ENCODE measurements at regions of chr2 and their contacts with region 1.

Region 1: DNA sequence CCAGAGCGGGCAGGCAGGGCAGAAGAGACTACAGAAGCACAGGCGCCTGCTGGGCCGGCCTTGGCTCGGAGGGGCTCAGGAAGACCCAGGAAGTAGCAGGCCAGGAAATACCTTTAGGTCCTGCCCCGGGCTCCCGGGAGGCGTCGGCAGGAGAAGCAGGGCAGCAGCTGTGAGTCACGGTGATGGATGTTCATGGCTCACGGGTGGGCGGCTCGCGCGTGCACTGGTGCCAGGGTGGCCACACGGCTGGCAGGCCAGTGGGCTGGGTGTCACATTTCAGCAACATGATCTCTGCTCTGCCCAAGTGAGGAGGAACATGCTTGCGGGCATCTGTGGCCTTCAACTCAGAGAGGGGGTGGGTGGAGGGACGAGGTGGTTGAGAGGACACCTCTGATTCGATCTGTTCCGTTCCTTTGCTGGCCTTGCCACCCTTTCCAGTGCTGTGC is 139.3 kb downstream of the KLHL29 start:
- DNase-seq: peak; percentile 91 to 98
- ATAC-seq: peak; percentile 77 to 78
- H3K4me3 ChIP-seq: peak overlapping the region; percentile 42 to 55 (median 46)
- H3K27ac ChIP-seq: peak overlapping the region; percentile 93 to 97 (median 96)
- H3K4me1 ChIP-seq: peaks cover 54 to 56% of the 10 kb centered on the region in 2 donors
- H3K27me3 ChIP-seq: no peaks in the 10 kb centered on the region
- CTCF ChIP-seq: peak in 1 of 5 experiments; percentile 12
- POLR2A ChIP-seq: peak; percentile 73 to 89

Region 2: DNA sequence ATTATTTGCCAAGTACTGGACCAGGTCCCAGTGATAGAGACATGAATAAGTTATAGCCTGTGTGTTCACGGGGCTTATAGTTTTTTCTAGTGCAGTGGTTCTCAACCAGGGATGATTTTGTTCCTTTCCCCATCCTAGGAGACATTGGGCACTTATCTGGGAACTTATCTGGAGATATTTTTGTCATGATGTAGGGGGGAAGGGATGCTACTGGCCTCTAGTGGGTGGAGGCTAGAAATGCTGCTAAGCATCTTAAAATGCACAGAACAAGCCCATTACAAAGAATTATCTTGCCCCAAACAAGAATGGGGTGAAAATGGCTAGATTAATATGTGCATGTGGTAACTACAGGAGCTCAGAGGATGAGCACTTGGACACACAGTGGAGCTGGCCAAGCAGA is 64.1 kb before region 1 on chr2:
- in situ Hi-C with region 1: no loop called
- intact Hi-C with region 1: no loop called
- DNase-seq: no peak
- ATAC-seq: no peak
- H3K4me3 ChIP-seq: no peak overlapping the region
- H3K27ac ChIP-seq: no peak overlapping the region
- H3K4me1 ChIP-seq: no peaks in the 10 kb centered on the region
- H3K27me3 ChIP-seq: no peaks in the 10 kb centered on the region
- CTCF ChIP-seq: peak in 2 of 5 experiments; percentile 15 to 41
- POLR2A ChIP-seq: no peak

Region 3: DNA sequence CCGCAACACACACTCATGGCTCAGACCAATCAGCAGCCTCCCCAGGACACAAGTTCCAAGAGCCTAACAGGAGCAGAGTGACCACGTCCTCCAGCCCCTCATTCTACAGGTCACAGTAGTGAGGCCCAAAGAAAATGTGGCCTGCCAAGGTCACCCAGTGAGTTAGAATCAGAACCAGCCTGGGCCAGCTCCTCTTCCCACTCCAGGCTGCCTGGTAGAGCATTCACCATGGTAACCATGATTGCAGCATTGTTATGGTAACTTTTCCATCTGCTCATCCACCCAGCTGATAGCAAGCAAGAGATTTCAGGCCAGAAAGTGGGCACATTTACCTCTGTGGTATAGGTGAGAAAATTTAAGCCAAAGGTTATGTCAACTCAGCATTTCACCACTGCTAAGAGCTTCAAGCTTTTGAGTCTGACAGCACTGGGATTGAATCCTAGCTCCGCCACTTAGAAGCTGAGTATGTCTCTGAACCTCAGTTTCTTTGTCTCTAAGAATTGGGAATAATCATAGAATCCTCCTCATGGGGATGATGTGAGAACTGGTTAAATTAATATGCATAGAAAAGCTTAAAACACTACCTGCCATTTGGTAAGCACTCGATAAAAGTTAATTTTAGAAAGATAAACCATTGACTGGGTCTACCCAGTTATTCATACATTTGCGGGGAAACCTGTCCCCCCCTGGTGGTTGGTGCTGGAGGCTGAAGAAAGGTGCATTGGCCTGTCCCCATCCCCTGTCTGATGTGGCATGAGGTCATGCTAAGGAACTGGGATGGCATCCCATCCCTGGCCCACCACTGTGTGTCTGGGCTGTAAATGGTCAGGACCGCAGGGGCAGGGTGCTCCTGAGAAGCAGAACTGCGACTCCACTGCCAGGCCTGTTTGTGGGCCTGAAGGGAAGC is 42.2 kb after region 1 on chr2:
- in situ Hi-C with region 1: no loop called
- intact Hi-C with region 1: loop called (anchors 1 kb)
- DNase-seq: no peak
- ATAC-seq: no peak
- H3K4me3 ChIP-seq: no peak overlapping the region
- H3K27ac ChIP-seq: peak overlapping the region; percentile 85 to 93 (median 89)
- H3K4me1 ChIP-seq: peaks cover 41 to 63% of the 10 kb centered on the region in 2 donors
- H3K27me3 ChIP-seq: no peaks in the 10 kb centered on the region
- CTCF ChIP-seq: peak in 3 of 5 experiments; percentile 23 to 45 (median 44)
- POLR2A ChIP-seq: no peak

Region 4: DNA sequence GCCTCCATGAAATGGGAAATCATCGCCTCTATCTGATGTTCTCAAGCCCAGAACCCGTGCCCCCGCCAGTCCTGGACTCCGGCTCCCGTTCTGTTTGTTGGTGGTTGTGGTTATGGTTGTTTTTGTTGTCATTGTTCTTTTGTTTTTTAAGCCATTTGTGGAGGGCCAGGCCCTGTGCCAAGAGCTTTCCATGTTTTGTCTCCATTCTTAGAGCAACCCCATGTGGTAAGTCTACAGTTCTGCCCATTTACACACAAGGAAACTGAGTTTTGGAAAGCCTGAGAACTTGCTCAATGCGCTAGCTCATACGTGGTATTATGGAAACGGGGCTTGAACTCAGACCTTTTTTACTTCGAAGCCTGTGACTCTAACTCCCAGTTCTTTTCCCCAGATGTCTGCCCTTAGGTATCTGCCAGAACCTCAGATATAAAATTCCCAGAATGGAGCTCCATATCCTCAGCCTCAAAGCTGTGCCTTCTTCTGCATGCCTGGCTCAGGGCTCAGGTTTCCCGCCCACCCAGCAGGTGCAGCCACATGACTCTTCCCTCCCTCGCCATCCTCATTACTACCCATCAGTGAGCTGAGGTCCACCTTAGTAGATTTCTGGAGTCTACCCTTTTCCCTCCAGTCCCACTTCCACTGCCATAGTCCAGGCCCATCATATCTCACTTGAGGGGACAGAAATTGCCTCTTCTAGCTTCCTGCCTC is 54.8 kb after region 1 on chr2:
- in situ Hi-C with region 1: no loop called
- intact Hi-C with region 1: no loop called
- DNase-seq: no peak
- ATAC-seq: no peak
- H3K4me3 ChIP-seq: no peak overlapping the region
- H3K27ac ChIP-seq: no peak overlapping the region
- H3K4me1 ChIP-seq: peaks cover 6 to 8% of the 10 kb centered on the region in 2 donors
- H3K27me3 ChIP-seq: no peaks in the 10 kb centered on the region
- CTCF ChIP-seq: no peak
- POLR2A ChIP-seq: no peak

Region 5: GRCh38 chr2:23595601-23596251 is 71.4 kb after region 1 on chr2:
- in situ Hi-C with region 1: loop called in 1 of 4 experiments (anchors 5 kb)
- intact Hi-C with region 1: loop called (anchors 2 kb)
- DNase-seq: peak in 1 of 2 donors; percentile 79
- ATAC-seq: peak; percentile 48 to 64
- H3K4me3 ChIP-seq: peak overlapping the region; percentile 34 to 58 (median 47)
- H3K27ac ChIP-seq: peak overlapping the region; percentile 83 to 93 (median 88)
- H3K4me1 ChIP-seq: peaks cover 40 to 78% of the 10 kb centered on the region in 2 donors
- H3K27me3 ChIP-seq: no peaks in the 10 kb centered on the region
- CTCF ChIP-seq: peak in 1 of 5 experiments; percentile 34
- POLR2A ChIP-seq: no peak

Region 6: GRCh38 chr2:23617167-23617810 is 93.0 kb after region 1 on chr2:
- in situ Hi-C with region 1: no loop called
- intact Hi-C with region 1: loop called (anchors 2 kb)
- DNase-seq: peak; percentile 55 to 75
- ATAC-seq: peak; percentile 71 to 86
- H3K4me3 ChIP-seq: peak overlapping the region in 3 of 4 donors; percentile 8 to 21 (median 10)
- H3K27ac ChIP-seq: peak overlapping the region; percentile 61 to 76 (median 67)
- H3K4me1 ChIP-seq: peaks cover 19 to 23% of the 10 kb centered on the region in 2 donors
- H3K27me3 ChIP-seq: no peaks in the 10 kb centered on the region
- CTCF ChIP-seq: peak; percentile 23 to 69 (median 62)
- POLR2A ChIP-seq: no peak

Measured in gastrocnemius medialis (tissue), 4 donors.